Transverse colon (tissue), 4 donors: ENCODE measurements at regions of chr2 and their contacts with region 1.

Region 1: DNA sequence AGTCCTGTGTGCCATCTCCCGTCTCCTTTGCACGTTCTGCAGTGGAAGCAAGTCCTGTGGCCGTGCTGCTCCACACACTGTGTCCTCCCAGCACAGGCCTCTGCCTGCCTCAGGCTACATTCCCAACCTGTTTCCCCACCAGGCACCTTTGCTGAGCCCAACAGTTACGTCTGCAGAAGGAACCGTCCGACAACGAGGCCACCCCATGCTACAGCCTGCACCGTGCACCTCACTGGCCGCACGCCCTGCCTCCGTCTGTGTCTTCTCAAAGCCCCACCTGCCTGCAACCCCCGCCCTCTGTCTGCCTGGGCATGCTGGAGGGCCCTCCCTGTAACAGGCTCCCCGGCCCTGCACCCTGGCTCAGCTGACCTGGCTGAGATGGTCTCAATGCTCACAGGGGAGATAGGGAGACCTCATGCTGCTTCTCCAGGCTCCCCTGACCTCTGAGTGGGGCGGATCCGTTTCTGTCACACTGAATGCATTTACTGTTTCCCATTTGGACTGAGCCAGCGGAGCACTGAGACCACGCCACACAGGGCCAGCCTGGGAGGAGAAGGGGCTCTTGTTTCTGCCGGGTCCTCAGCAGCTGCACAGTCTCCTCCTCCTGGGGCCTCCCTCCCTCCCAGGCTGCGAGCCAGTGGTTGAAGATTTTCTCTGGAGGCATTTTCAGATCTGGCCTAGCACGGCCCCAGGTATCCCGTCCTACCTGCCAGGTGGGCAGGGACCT is 109.1 kb upstream of the OTOS start:
- DNase-seq: no peak
- H3K4me3 ChIP-seq: no peak overlapping the region
- H3K27ac ChIP-seq: peak overlapping the region in 3 of 4 donors; percentile 55 to 81 (median 74)
- H3K4me1 ChIP-seq: peaks cover 10 to 18% (median 12%) of the 10 kb centered on the region in 4 donors
- H3K27me3 ChIP-seq: no peaks in the 10 kb centered on the region
- CTCF ChIP-seq: no peak
- EP300 ChIP-seq: no peak
- POLR2A ChIP-seq: no peak

Region 2: GRCh38 chr2:240292619-240293525 is 43.3 kb after region 1 on chr2:
- in situ Hi-C with region 1: no loop called
- intact Hi-C with region 1: loop called (anchors 1 kb)
- DNase-seq: no peak
- H3K4me3 ChIP-seq: no peak overlapping the region
- H3K27ac ChIP-seq: no peak overlapping the region
- H3K4me1 ChIP-seq: no peaks in the 10 kb centered on the region
- H3K27me3 ChIP-seq: no peaks in the 10 kb centered on the region
- CTCF ChIP-seq: no peak
- EP300 ChIP-seq: no peak
- POLR2A ChIP-seq: no peak